Posterior cingulate gyrus (tissue), 11 donors: ENCODE measurements at regions of chr3 and their contacts with region 1.

Region 1: DNA sequence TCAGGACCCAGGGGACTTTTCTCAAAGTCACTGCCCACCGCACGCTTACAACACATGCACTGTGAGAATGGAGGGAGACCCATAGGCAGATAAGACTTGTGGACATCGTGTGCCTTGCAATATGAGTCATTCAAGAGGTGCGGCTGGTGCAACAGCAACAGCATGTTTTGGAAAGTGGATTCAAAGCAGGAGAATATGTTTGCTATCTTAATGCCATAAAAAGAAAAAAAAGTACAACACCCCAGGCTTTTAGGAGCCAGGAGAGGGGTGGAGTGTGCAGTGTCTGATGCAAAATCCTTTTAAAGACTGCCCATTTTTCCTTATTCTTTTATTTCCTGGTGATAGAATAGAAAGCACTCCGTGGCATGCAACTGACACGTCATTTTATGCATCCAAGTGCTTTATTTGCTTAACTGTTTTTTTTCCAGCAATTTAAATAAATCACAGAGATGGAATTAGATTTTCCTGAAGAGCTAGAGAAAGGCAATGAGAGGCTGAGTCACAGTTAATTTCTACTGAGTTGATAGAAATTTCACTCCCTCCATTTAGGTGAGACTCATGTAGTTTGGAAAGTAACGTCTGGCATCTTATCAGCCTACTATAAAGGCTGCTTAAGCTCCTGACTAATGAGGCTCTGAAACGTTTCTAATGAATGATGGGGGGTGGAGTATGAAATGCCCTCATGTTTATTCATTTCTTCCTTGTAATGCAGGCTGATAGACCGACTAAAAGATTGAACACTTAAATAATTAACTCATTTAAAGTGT is 96.4 kb downstream of the NSUN3 start:
- DNase-seq: no peak

Region 2: DNA sequence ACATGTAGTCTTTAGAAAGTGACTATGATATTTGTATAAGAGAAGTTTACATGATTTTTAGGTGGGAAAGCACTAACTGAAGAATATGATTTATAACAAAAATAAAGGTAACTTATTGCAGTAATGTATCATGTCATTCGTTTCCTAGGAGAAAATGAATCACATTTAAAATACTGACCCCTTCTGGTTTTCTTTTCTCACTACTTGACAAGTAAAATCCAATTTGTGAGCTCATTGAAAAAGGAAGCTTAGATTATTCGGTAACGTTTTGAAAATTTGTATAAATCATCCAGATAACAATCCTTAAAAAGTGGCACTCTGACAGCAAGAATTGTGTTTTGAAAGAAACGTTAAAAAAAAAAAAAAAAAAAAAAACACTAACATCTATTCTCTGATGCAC is 57.4 kb before region 1 on chr3:
- intact Hi-C with region 1: no loop called
- DNase-seq: no peak

Region 3: GRCh38 chr3:94210256-94210655 is 51.0 kb after region 1 on chr3:
- intact Hi-C with region 1: no loop called
- DNase-seq: no peak

Region 4: DNA sequence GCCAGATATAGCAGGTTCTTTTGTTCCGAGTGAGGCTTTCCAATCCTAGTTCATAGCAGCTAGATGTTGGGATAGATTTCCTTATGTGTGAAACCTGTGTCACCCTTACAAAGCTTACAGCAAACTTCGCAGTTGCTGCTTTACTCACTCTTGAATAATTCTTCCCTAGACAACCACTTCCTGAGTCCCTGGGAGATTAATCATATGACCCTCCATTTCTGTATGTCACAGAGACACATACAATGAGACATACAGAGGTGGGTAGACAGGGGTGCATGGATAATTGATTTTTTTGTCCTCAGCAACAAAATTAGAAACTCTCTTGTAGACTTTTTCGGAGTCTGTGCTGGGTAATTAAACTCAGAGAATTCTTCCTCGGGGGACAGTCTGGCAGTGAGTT is 66.8 kb after region 1 on chr3:
- intact Hi-C with region 1: loop called (anchors 10 kb)
- DNase-seq: no peak